ENCODE measurements at regions of chr10 and their contacts with region 1.

Region 1: GRCh38 chr10:6151087-6151977 is 51.4 kb upstream of the PFKFB3 start:
- DNase-seq: peak; percentile 68
- ATAC-seq: peak; percentile 76
- H3K4me3 Mint-ChIP-seq: no peak overlapping the region
- H3K27ac Mint-ChIP-seq: peak overlapping the region; percentile 56
- H3K4me1 Mint-ChIP-seq: peaks cover 39% of the 10 kb centered on the region
- H3K27me3 Mint-ChIP-seq: no peaks in the 10 kb centered on the region

Region 2: GRCh38 chr10:6108603-6109443 is 42.5 kb before region 1 on chr10:
- CTCF ChIA-PET with region 1: interaction called, 25 read pairs
- DNase-seq: peak; percentile 54
- ATAC-seq: peak; percentile 53
- H3K4me3 Mint-ChIP-seq: no peak overlapping the region
- H3K27ac Mint-ChIP-seq: peak overlapping the region; percentile 77
- H3K4me1 Mint-ChIP-seq: peaks cover 34% of the 10 kb centered on the region
- H3K27me3 Mint-ChIP-seq: no peaks in the 10 kb centered on the region

Region 3: DNA sequence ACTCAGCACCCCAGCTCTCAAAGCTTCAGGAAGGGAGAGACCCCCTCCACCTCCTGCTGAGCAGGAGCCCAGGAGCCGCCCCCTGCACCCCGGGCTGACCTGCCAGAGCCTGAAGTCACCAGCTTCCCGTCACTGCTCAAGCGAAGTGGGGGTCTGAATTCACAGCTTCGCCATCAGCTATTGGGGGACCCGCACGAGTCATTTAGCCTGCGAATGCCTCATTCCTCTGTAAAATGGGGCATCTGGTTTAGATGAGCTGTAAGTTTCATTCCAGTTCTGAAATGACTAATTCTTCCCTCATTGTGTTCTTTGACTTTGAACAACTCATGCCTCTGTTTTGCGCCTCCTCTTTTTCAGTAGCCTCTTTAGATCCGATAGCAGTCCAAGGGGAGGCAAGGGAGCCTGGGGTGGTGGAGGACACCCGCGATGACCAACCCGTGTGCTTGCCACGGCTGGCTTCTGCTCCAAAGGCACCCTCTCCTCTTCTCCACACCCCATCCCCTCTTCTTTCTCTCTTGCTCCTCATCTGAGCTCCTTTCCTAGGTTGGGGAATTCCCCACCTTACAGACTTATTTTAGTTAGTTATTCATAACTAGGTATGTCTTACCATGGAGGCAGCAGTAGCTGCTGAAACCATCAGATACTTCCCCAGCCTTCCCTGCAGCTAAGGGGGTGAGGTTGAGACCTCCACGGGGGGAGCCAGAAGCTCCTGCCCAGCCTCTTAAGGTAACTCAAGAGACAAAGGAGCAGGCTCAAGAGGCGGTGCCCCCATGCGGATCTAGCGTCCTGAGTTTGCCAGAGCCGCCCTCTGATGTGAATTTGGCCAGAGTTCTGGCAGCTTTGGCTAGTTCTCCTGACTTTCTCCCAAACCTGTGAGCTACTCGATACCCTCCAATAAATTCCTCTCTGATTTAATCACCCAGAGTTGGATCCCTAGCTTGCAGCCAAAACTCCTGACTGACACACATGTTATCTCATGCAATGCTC is 14.8 kb before region 1 on chr10:
- CTCF ChIA-PET with region 1: interaction called, 20 read pairs
- DNase-seq: peak; percentile 83
- ATAC-seq: peak; percentile 65
- H3K4me3 Mint-ChIP-seq: peak overlapping the region; percentile 41
- H3K27ac Mint-ChIP-seq: peak overlapping the region; percentile 52
- H3K4me1 Mint-ChIP-seq: peaks cover 57% of the 10 kb centered on the region
- H3K27me3 Mint-ChIP-seq: peaks cover 25% of the 10 kb centered on the region